SK-N-SH (cell line): ENCODE measurements at regions of chr17 and their contacts with region 1.

Region 1: DNA sequence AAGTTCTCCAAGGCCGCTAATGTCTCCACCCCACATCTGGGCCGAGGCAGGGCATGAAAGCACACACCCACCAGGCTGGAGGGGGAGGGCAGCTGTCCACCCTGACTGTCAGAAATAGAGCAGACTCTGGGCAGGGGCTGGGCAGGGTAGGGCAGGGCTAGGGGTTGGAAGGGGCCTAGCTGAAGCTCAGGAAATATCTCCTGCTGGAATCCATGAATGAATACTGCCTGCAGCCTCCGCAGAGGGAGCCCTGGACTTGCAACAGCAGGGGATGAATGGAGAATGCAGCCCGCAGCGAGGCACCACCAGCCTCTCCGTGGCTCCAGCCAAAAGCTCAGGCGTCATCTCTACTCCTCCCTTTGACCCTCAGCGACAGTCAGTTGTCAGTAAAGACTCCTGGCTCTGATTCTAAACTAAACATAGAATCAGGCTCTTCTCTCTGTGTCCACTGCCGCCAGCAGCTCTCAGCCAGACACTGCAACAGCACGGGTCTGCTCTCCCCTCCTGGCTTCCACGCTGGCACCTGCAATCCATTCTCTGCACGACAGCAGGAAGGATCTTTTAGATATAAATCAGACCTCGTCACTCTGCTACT is 23.9 kb upstream of the NGFR start:
- DNase-seq: peak; percentile 87
- H3K4me3 ChIP-seq: no peak overlapping the region
- H3K27ac ChIP-seq: peak overlapping the region in 1 of 2 experiments; percentile 82; a peak in 2 of 4 replicates
- H3K4me1 ChIP-seq: peaks cover 0 to 32% of the 10 kb centered on the region in 2 experiments; a peak in 1 of 4 replicates
- H3K27me3 ChIP-seq: peaks cover 68% of the 10 kb centered on the region
- CTCF ChIP-seq: no peak
- EP300 ChIP-seq: no peak
- RAD21 ChIP-seq: peak; percentile 44

Region 2: GRCh38 chr17:49414622-49415350 is 56.4 kb before region 1 on chr17 and contains the start of gene PHB1:
- CTCF ChIA-PET with region 1: interaction called, 11 read pairs
- POLR2A ChIA-PET with region 1: interaction called, 3 read pairs
- DNase-seq: peak; percentile 97
- H3K4me3 ChIP-seq: peak within 1 kb of the TSS; percentile 86 to 87
- H3K27ac ChIP-seq: peak within 1 kb of the TSS in 1 of 2 experiments; percentile 48; a peak in 1 of 4 replicates
- H3K4me1 ChIP-seq: peaks cover 0 to 11% of the 10 kb centered on the region in 2 experiments; a peak in 2 of 4 replicates
- H3K27me3 ChIP-seq: no peaks in the 10 kb centered on the region
- CTCF ChIP-seq: no peak
- EP300 ChIP-seq: no peak
- RAD21 ChIP-seq: no peak
- polyA plus RNA-seq, gene PHB1: 379 and 477 TPM in 2 replicates

Region 3: DNA sequence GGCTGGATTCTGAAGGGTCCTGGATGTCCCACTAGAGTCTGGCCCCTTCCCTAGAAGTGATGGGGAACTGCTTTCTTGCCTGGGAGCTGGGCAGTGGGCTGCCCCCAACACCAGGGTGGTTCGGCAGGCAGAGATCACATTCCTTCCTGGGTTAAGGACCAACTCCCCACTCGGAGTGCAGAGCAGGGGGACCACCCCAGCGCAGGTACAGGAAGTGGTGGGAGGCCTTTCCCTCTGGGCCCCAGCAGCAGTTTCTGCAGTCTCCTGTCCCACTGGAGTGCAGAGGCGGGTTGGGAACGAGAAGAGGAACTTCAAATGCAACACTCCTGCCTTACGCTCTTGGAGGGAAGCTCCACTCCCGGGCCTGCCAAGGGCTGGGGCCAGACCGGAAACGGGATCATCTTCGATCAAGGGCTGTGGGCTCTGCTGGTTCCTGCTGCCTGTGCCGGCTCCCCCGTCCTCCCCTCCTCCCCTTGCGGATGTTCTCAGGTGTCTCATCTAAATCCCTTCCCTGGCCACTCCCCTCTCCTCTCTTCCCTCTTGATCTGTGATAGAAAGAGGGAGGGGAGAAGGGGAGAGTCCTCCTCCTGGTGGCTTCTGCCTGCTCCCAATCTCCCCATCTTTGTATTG is 14.9 kb after region 1 on chr17:
- CTCF ChIA-PET with region 1: interaction called, 179 read pairs
- POLR2A ChIA-PET with region 1: interaction called, 4 read pairs
- DNase-seq: no peak
- H3K4me3 ChIP-seq: no peak overlapping the region
- H3K27ac ChIP-seq: no peak overlapping the region
- H3K4me1 ChIP-seq: peaks cover 0 to 28% of the 10 kb centered on the region in 2 experiments; a peak in 1 of 4 replicates
- H3K27me3 ChIP-seq: peaks cover 76% of the 10 kb centered on the region
- CTCF ChIP-seq: no peak
- EP300 ChIP-seq: no peak
- RAD21 ChIP-seq: no peak